ENCODE measurements at regions of chr20 and their contacts with region 1.

Region 1: GRCh38 chr20:59165891-59166709 is 2.5 kb downstream of the ZNF831 start:
- DNase-seq: peak; percentile 38
- H3K4me3 ChIP-seq: peak overlapping the region; percentile 72
- H3K27ac ChIP-seq: peak overlapping the region; percentile 86
- H3K4me1 ChIP-seq: peaks cover 64% of the 10 kb centered on the region
- CTCF ChIP-seq: no peak

Region 2: GRCh38 chr20:59120491-59120890 is 45.6 kb before region 1 on chr20:
- CTCF ChIA-PET with region 1: interaction called, 6 read pairs
- POLR2A ChIA-PET with region 1: interaction called, 49 read pairs
- intact Hi-C with region 1: loop called (anchors 2 kb)
- DNase-seq: peak; percentile 55
- H3K4me3 ChIP-seq: no peak overlapping the region
- H3K27ac ChIP-seq: no peak overlapping the region
- H3K4me1 ChIP-seq: peaks cover 66% of the 10 kb centered on the region
- CTCF ChIP-seq: no peak

Region 3: DNA sequence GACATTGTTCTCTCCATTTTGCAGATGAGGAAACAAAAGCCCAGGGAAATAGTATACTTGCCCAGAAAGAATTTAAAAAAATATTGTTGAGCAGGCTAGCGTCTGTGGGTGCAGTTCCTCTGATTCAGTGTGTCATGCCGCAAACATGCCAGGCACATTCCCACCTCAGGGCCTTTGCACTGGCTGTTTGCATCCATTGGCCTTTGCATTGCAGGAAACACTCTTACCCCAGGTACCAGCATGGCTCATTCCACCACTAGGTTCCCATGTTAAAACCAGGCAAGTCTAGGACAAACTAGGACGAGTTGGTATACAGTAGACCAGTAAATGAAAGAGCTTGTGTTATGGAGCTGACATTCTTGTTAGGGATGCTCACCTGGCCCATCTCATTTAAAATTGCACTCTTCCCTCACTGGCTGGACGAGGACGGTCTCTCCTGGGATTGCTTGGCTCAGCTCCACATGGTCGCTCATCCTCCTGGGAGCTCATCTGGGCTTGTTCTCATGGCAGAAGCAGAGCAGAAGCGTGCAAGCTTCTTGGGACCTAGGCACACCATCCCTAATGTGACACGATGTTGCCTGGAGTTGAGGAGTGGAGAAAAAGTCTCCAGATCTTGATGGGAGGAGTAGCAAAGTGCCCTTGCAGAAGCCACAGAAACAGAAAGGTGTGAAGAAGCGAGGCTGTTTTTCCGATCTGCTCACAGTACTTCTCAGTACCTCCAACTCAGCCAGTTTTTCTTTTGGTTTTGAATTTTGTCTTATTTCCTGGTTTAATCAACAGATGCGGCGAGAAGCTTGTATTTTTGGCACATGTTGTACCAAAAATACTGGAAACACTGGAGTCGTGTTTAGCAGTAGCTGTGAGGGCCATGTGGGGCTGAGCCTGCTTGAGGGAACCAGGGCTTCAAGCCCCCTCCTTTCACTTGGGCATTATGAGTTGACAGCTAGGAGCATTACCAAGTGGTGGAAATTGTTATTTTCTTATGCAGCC is 11.5 kb after region 1 on chr20:
- CTCF ChIA-PET with region 1: interaction called, 5 read pairs
- POLR2A ChIA-PET with region 1: interaction called, 10 read pairs
- intact Hi-C with region 1: no loop called
- DNase-seq: no peak
- H3K4me3 ChIP-seq: no peak overlapping the region
- H3K27ac ChIP-seq: no peak overlapping the region
- H3K4me1 ChIP-seq: peaks cover 17% of the 10 kb centered on the region
- CTCF ChIP-seq: no peak

Measured in OCI-LY7 (cell line).